OCI-LY7 (cell line): ENCODE measurements at regions of chr20 and their contacts with region 1.

Region 1: DNA sequence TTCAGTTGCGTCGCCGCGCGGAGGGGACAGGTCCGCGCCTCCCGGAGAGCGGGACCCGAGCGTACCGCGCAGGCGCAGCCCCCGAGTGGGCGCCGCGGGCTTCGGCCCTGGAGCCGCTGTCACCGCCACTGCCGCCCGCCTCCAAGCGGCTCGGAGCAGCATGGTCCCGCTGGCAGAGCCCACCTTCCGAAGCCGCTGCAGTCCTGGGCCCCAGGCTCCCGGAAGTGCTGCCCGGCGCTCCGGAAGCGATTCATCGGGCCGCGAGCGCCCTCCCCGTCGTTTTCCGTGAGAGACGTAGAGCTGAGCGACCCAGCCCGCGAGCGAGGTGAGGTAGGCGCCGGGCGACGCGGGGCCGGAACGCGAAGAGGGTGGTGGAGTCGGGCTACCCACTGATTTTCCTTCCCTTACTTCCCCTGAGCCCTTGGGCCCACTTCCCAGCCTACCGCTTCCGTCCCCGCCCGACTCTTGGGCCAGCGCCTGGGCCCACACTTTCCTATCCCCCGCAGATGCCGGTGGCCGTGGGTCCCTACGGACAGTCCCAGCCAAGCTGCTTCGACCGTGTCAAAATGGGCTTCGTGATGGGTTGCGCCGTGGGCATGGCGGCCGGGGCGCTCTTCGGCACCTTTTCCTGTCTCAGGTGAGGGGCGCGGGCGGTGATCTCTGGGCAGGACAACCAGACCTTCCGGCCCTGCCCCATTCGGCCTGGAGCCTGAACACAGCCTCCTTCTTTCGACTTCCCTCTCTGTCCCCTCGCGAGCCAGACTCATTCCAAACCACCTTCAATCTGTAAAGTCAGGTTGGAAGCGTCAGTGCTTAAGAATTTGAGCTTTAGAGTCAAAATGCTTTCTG is at the starts of genes NFS1 and ROMO1:
- DNase-seq: peak; percentile 92
- H3K4me3 ChIP-seq: peak within 1 kb of the TSS; percentile 87
- H3K27ac ChIP-seq: peak within 1 kb of the TSS; percentile 74
- H3K4me1 ChIP-seq: peaks cover 23% of the 10 kb centered on the region
- CTCF ChIP-seq: peak; percentile 44; the same call in 1 of the 2 replicates
- total RNA-seq, gene NFS1: 32.8 and 56.2 TPM in 2 replicates
- total RNA-seq, gene ROMO1: 393 and 411 TPM in 2 replicates

Region 2: DNA sequence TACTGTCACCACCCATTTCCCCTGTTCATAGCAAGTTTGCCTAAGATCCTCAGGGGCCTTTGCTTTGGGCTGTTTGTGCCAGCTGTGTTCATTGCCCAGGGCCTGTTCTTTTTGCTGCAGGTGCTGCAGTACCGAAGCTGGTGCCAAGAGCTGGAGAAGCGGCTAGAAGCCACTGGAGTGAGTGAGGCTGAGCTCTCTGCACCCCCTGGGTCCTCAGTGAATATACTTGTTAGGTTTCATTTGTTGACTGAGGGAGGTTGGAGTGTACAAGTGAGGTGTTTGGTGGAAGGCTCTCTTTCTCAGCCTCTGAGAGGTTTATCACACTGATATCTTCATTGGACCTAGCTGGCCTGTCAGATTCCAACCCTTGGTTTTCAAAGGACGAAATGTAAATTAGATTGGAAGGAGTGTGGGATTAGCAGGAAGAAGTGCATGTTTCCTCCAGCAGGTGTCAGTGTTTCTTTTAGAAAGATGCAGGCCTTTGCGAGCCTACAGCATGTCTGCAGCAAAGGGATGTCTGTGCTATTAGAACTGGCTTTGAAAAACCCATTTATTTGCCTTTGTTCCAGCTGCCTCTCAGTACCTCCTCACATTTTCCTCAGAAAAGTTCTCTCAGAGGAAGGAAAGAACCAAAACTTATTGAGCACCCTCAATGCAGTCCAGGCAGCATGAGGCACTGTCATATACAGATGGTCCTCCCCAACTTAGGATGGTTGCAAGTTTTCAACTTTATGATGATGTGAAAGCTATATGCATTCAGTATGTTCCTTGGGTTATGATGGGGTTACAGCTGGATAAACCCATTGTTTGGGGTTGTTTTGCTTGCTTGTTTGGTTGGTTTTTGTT is 235.7 kb before region 1 on chr20:
- CTCF ChIA-PET with region 1: no interaction called
- POLR2A ChIA-PET with region 1: no interaction called
- intact Hi-C with region 1: loop called (anchors 5 kb)
- DNase-seq: peak; percentile 80
- H3K4me3 ChIP-seq: no peak overlapping the region
- H3K27ac ChIP-seq: no peak overlapping the region
- H3K4me1 ChIP-seq: peaks cover 22% of the 10 kb centered on the region
- CTCF ChIP-seq: peak; percentile 98

Region 3: DNA sequence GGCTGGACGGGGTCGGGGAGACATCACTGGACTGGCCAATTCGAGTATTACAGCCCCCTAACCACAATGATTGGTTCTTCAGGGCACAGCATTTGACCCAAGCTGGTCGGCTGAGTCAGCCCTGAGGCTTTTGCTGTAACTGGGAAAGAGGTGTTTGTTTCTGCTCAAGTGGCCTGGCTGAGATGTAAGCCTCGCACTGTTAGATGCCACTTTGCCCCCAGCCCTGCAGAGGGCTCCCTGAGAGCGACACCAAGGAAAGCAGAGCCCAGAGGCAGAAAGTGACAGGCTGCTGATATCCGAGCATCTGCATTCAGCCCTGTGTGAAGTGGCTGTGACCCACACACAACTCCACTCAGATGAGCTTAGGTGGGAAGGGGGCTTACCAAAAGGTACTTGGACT is 138.1 kb before region 1 on chr20:
- CTCF ChIA-PET with region 1: no interaction called
- POLR2A ChIA-PET with region 1: no interaction called
- intact Hi-C with region 1: loop called (anchors 1 kb)
- DNase-seq: peak; percentile 82
- H3K4me3 ChIP-seq: no peak overlapping the region
- H3K27ac ChIP-seq: peak overlapping the region; percentile 43
- H3K4me1 ChIP-seq: peaks cover 13% of the 10 kb centered on the region
- CTCF ChIP-seq: peak; percentile 83

Region 4: DNA sequence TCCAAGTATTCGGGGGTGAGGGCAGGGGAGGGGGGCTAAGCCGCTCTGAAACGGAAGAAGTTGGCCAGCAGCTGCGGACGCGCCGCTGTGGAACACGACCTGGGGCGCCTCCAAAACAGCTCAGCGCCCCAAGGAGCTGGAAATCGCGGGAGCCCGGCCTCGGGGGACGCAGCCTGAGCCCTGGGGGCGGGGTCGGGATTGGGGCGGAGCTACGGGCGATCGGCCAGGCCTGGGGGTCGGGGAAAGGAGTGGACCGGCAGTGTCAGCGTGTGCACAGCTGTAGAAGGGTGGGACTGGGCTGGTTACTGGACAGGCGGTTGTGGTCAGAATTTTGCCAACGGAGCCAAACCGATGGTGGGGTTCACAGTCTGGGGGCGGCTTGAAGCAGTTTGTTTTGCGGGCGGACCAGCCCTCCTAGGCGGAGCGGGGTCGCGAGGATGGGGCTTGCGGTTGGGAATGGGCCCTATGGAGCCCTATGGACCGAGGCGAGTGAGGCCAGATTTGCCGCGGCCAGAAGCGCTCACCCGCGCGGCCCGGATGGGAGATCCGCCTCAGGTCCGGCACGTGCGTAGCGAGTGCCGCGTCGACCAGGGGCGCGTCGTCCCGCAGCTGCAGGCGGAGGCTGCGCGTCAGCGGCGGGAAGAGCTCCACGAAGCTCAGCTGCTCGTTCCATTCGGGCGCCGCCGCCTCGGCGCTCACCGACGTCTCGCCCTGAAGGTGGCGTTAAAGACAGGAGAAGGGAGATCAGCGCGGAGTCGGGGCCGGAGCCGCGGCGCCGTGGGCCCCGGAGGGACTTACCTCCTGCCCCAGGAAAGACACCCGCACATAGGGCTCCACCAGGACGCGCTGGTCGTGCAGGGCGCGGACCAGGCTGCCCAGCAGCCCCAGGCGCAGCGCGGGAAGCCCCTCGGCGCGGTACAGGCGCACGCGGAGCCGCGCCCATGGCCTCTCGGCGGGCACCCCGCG is 98.1 kb before region 1 on chr20:
- CTCF ChIA-PET with region 1: interaction called, 3 read pairs
- POLR2A ChIA-PET with region 1: no interaction called
- intact Hi-C with region 1: loop called (anchors 5 kb)
- DNase-seq: peak; percentile 63
- H3K4me3 ChIP-seq: peak overlapping the region; percentile 26
- H3K27ac ChIP-seq: no peak overlapping the region
- H3K4me1 ChIP-seq: peaks cover 37% of the 10 kb centered on the region
- CTCF ChIP-seq: peak; percentile 62

Region 5: DNA sequence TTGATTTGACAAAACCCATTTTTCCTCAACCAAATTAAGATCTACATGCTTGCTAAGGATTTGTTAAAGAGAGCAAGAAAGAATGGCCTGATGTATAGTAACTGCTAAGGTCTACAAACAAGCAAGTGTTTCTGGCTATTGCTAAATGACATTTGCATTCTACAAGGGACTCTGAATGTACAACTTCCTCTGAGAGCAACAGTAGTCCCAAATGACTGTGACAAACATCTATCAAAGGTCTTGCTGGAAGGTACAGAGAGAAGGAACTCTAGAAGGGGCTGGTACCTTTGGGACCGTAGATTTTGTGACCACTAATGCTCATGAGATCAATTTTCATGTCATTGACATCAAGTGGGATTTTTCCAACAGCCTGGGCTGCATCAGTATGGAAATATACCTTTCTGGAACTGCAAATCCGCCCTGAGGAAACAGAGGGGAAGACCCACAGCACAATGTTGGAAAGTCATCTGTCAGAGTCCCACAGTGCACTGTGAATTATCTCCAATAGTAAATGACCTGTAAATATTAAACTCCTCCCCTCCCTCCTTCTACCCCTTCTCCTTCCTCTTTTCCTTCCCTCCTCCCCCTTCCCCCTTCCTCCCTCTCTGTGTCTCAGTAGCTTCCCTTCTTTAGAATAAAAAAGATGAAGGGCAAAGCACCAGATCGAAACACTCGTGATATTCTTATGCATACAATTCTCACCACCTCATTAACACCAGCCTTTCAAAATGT is 18.7 kb before region 1 on chr20:
- CTCF ChIA-PET with region 1: no interaction called
- POLR2A ChIA-PET with region 1: no interaction called
- intact Hi-C with region 1: no loop called
- DNase-seq: peak; percentile 15
- H3K4me3 ChIP-seq: no peak overlapping the region
- H3K27ac ChIP-seq: peak overlapping the region; percentile 18
- H3K4me1 ChIP-seq: peaks cover 13% of the 10 kb centered on the region
- CTCF ChIP-seq: no peak

Region 6: GRCh38 chr20:35741892-35742740 is 42.8 kb after region 1 on chr20 and contains the start of gene RBM39:
- CTCF ChIA-PET with region 1: no interaction called
- POLR2A ChIA-PET with region 1: interaction called, 4 read pairs
- intact Hi-C with region 1: loop called (anchors 5 kb)
- DNase-seq: peak; percentile 100
- H3K4me3 ChIP-seq: peak within 1 kb of the TSS; percentile 95
- H3K27ac ChIP-seq: peak within 1 kb of the TSS; percentile 96
- H3K4me1 ChIP-seq: peaks cover 42% of the 10 kb centered on the region
- CTCF ChIP-seq: peak; percentile 33; the same call in 1 of the 2 replicates
- total RNA-seq, gene RBM39: 346 and 448 TPM in 2 replicates

Region 7: GRCh38 chr20:35883778-35884540 is 184.6 kb after region 1 on chr20:
- CTCF ChIA-PET with region 1: no interaction called
- POLR2A ChIA-PET with region 1: no interaction called
- intact Hi-C with region 1: loop called (anchors 2 kb)
- DNase-seq: peak; percentile 72
- H3K4me3 ChIP-seq: no peak overlapping the region
- H3K27ac ChIP-seq: no peak overlapping the region
- H3K4me1 ChIP-seq: no peaks in the 10 kb centered on the region
- CTCF ChIP-seq: peak; percentile 86

Region 8: GRCh38 chr20:36219671-36220220 is 520.4 kb after region 1 on chr20:
- CTCF ChIA-PET with region 1: no interaction called
- POLR2A ChIA-PET with region 1: no interaction called
- intact Hi-C with region 1: no loop called
- DNase-seq: no peak
- H3K4me3 ChIP-seq: no peak overlapping the region
- H3K27ac ChIP-seq: no peak overlapping the region
- H3K4me1 ChIP-seq: no peaks in the 10 kb centered on the region
- CTCF ChIP-seq: no peak